HepG2 (cell line): ENCODE measurements at regions of chr18 and their contacts with region 1.

Region 1: DNA sequence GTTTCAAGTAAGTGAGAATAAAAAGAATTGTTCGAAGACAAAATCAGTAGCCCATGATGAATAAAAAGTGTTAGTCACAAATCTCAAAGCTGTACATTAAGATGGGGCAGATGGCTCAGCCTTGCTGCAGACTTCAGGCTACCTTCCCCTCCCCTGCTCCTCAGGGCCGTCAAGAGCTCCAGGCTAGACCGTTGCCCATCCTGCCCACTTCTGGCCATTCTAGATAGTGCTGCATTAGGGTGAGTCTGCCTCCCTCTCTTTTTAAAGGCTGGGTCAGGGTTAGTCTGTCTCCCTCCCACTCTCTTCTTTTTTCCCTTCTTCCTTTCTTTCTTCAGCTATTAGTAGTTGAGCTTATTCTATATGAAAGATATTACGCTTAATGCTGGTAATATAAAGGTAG is 86.0 kb downstream of the MAPRE2 start:
- DNase-seq: peak; percentile 19
- ATAC-seq: peak; percentile 91
- H3K4me3 ChIP-seq: no peak overlapping the region
- H3K27ac ChIP-seq: no peak overlapping the region
- H3K4me1 ChIP-seq: no peaks in the 10 kb centered on the region
- H3K27me3 ChIP-seq: no peaks in the 10 kb centered on the region
- CTCF ChIP-seq: peak; percentile 45; the same call in 1 of the 2 replicates
- EP300 ChIP-seq: no peak
- POLR2A ChIP-seq: no peak
- RAD21 ChIP-seq: no peak

Region 2: DNA sequence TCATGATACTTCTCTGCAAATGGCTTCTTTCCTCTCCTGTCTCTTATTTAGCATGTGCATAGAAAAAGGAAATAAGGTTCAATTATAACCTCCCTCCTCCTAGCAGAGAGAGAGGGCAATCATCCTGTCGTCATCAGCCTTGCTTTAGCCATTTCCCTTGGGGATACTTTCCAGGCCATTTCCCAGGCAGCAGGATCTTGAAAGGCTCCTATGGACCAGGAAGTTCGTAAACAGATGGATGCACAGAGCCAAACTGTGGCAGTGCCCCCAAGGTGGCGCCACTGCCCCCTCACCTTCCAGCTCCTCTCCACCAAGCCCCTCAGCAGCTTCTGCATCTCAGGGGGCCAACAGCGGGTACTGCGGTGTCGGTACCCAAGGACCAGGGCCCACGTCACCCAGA is 259.7 kb before region 1 on chr18:
- CTCF ChIA-PET with region 1: no interaction called
- POLR2A ChIA-PET with region 1: no interaction called
- in situ Hi-C with region 1: no loop called
- intact Hi-C with region 1: loop called (anchors 5 kb)
- DNase-seq: peak; percentile 12
- ATAC-seq: peak; percentile 76
- H3K4me3 ChIP-seq: no peak overlapping the region
- H3K27ac ChIP-seq: no peak overlapping the region
- H3K4me1 ChIP-seq: no peaks in the 10 kb centered on the region
- H3K27me3 ChIP-seq: no peaks in the 10 kb centered on the region
- CTCF ChIP-seq: peak; percentile 68
- EP300 ChIP-seq: no peak
- POLR2A ChIP-seq: no peak
- RAD21 ChIP-seq: 0 out of 2 replicates have a peak, but pooled peaks have one; percentile 17

Region 3: GRCh38 chr18:35005963-35006577 is 121.1 kb before region 1 on chr18:
- CTCF ChIA-PET with region 1: interaction called, 3 read pairs
- POLR2A ChIA-PET with region 1: no interaction called
- in situ Hi-C with region 1: loop called (anchors 25 kb)
- intact Hi-C with region 1: loop called (anchors 1 kb)
- DNase-seq: peak; percentile 60
- ATAC-seq: peak; percentile 83
- H3K4me3 ChIP-seq: no peak overlapping the region
- H3K27ac ChIP-seq: no peak overlapping the region
- H3K4me1 ChIP-seq: 0 out of 2 replicates have a peak, but pooled peaks cover 5% of the 10 kb centered on the region
- H3K27me3 ChIP-seq: no peaks in the 10 kb centered on the region
- CTCF ChIP-seq: peak; percentile 76
- EP300 ChIP-seq: no peak
- POLR2A ChIP-seq: no peak
- RAD21 ChIP-seq: peak; percentile 73